ENCODE measurements at regions of chr13 and their contacts with region 1.

Region 1: GRCh38 chr13:110250258-110250891 is 56.6 kb downstream of the COL4A1 start:
- DNase-seq: peak; percentile 77
- ATAC-seq: no peak
- H3K4me3 ChIP-seq: no peak overlapping the region
- H3K27ac ChIP-seq: peak overlapping the region; percentile 78
- H3K4me1 ChIP-seq: peaks cover 41% of the 10 kb centered on the region
- H3K27me3 ChIP-seq: no peaks in the 10 kb centered on the region
- CTCF ChIP-seq: no peak
- POLR2A ChIP-seq: 0 out of 2 replicates have a peak, but pooled peaks have one; percentile 22
- RAD21 ChIP-seq: no peak

Region 2: GRCh38 chr13:110239280-110240125 is 10.9 kb before region 1 on chr13:
- CTCF ChIA-PET with region 1: interaction called, 11 read pairs
- POLR2A ChIA-PET with region 1: interaction called, 4 read pairs
- dilution Hi-C with region 1: no loop called
- in situ Hi-C with region 1: no loop called
- intact Hi-C with region 1: no loop called
- DNase-seq: no peak
- ATAC-seq: no peak
- H3K4me3 ChIP-seq: no peak overlapping the region
- H3K27ac ChIP-seq: no peak overlapping the region
- H3K4me1 ChIP-seq: peaks cover 17% of the 10 kb centered on the region
- H3K27me3 ChIP-seq: no peaks in the 10 kb centered on the region
- CTCF ChIP-seq: 0 out of 2 replicates have a peak, but pooled peaks have one; percentile 10
- POLR2A ChIP-seq: no peak
- RAD21 ChIP-seq: no peak; the same call in 1 of the 2 replicates

Region 3: GRCh38 chr13:110301606-110302553 is 51.5 kb after region 1 on chr13:
- CTCF ChIA-PET with region 1: interaction called, 5 read pairs
- POLR2A ChIA-PET with region 1: interaction called, 5 read pairs
- dilution Hi-C with region 1: no loop called
- in situ Hi-C with region 1: no loop called
- intact Hi-C with region 1: loop called (anchors 2 kb)
- DNase-seq: peak; percentile 90
- ATAC-seq: peak; percentile 72
- H3K4me3 ChIP-seq: no peak overlapping the region
- H3K27ac ChIP-seq: peak overlapping the region; percentile 72
- H3K4me1 ChIP-seq: peaks cover 34% of the 10 kb centered on the region
- H3K27me3 ChIP-seq: no peaks in the 10 kb centered on the region
- CTCF ChIP-seq: no peak
- POLR2A ChIP-seq: peak; percentile 15
- RAD21 ChIP-seq: no peak

Measured in IMR-90 (cell line).